ENCODE measurements at regions of chr17 and their contacts with region 1.

Region 1: GRCh38 chr17:53626286-53626685 is 196.4 kb upstream of the KIF2B start:
- DNase-seq: no peak
- H3K4me3 Mint-ChIP-seq: no peak overlapping the region
- H3K27ac Mint-ChIP-seq: no peak overlapping the region
- H3K4me1 Mint-ChIP-seq: no peaks in the 10 kb centered on the region
- H3K27me3 Mint-ChIP-seq: no peaks in the 10 kb centered on the region
- CTCF ChIP-seq: no peak

Region 2: GRCh38 chr17:53722407-53722806 is 96.1 kb after region 1 on chr17:
- CTCF ChIA-PET with region 1: no interaction called
- intact Hi-C with region 1: loop called (anchors 2 kb)
- DNase-seq: peak; percentile 49
- H3K4me3 Mint-ChIP-seq: peak overlapping the region; percentile 50
- H3K27ac Mint-ChIP-seq: peak overlapping the region; percentile 36
- H3K4me1 Mint-ChIP-seq: no peaks in the 10 kb centered on the region
- H3K27me3 Mint-ChIP-seq: no peaks in the 10 kb centered on the region
- CTCF ChIP-seq: no peak

Measured in Calu3 (cell line).